ENCODE measurements at regions of chr3 and their contacts with region 1.

Region 1: DNA sequence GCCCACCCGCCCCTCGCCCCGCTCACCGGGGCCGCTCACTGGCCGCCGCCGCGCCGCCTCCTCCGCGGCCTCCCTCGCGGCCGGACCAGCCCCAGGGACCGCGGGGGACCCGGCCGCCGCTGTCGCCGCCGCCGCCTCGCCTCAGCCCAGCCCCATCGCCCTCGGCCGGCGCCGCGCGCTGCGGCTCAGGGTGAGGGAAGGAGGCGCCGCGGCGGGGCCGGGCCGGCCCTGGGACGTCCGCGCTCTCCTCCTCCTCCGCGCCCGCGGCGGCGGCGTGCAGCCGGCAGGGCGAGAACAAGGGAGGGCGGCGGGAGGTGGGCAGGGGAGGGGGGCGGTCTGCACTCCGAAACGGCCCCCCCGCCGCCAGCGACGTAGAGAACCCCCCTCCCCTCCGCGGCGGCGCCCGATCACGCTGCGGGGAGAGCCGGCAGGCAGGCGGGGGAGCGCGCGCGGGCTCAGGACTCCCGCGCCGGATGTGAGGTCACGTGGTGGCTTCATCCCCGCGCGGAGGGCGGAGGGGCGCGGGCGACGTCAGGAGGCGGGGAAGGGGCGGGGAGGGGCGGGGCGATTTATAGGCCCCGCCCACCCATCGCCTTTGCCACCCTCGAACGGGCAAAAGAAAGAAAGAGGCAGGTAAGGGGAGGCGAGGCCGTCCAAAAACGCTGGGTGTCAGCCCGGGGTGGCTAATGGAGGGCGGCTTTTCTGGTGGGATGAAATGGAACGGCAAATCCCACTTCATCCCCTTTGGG is at the start of gene ATP13A3:
- DNase-seq: peak; percentile 96
- ATAC-seq: peak; percentile 96
- total RNA-seq, gene ATP13A3: 55.3 TPM

Region 2: DNA sequence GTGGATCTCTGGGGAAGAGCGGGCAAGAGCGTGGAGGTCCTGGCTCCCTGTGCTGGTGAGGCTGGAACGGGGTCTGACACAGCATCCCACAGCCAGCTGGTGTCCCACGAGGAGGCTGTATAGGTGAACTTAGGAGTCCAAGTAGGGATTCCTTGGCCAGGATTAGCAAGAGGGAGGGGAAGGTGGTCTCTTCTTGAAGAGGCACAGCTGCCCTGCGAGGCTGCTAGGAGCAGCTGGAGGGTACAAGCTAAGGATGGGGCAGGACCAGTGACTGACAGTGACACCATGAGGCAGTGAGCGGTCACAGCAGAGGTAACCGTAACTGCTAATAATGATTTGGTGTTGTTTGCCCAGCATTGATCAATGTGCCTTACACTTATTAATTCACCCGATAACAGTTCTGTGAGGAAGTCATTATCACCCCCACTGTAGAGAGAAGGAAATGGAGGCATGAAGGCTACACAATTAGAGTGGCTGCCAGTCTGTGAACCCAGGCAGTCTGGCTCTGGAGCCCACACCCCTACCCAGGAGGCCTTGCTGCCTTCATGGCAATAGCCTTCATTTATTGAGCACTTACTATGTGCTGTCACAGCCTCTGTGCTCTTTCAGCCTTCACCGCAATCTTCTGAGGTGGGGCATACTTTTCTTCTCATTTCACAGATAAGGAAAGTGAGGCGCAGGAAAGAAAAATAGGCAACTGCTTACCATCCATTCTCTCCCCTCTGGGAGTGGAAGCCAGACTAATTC is 87.2 kb after region 1 on chr3:
- intact Hi-C with region 1: loop called (anchors 5 kb)
- DNase-seq: no peak
- ATAC-seq: peak; percentile 56

Measured in Right ventricle myocardium inferior (tissue), 1 donor.